Calu3 (cell line): ENCODE measurements at regions of chr3 and their contacts with region 1.

Region 1: GRCh38 chr3:193665370-193665989 is 72.5 kb downstream of the OPA1 start:
- DNase-seq: no peak
- H3K4me3 Mint-ChIP-seq: no peak overlapping the region
- H3K27ac Mint-ChIP-seq: no peak overlapping the region
- H3K4me1 Mint-ChIP-seq: no peaks in the 10 kb centered on the region
- H3K27me3 Mint-ChIP-seq: no peaks in the 10 kb centered on the region
- CTCF ChIP-seq: peak; percentile 74

Region 2: DNA sequence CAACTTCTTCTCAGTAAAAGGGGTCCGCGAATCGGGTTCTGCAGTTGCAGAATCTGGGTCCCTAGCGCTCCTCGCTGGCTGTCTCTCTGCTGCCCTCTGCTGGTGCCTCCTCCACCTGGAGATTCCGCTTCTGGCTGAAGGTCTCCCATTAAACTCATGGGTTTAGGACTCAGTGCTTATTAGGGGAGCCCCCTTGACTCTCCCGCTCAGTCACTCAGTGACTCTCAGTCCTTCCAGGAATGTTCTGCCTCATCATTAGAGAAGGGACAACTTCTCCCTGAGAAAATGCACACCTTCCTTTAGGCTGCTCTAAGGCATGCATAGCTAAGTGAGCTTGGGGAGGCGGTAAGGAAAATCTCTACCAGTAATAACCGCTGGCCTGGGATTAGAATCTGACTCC is 678.5 kb after region 1 on chr3:
- CTCF ChIA-PET with region 1: interaction called, 7 read pairs
- intact Hi-C with region 1: loop called (anchors 5 kb)
- DNase-seq: peak; percentile 94
- H3K4me3 Mint-ChIP-seq: no peak overlapping the region
- H3K27ac Mint-ChIP-seq: no peak overlapping the region
- H3K4me1 Mint-ChIP-seq: peaks cover 7% of the 10 kb centered on the region
- H3K27me3 Mint-ChIP-seq: peaks cover 57% of the 10 kb centered on the region
- CTCF ChIP-seq: peak; percentile 99